Sciatic nerve (tissue), 2 donors: ENCODE measurements at regions of chr2 and their contacts with region 1.

Region 1: DNA sequence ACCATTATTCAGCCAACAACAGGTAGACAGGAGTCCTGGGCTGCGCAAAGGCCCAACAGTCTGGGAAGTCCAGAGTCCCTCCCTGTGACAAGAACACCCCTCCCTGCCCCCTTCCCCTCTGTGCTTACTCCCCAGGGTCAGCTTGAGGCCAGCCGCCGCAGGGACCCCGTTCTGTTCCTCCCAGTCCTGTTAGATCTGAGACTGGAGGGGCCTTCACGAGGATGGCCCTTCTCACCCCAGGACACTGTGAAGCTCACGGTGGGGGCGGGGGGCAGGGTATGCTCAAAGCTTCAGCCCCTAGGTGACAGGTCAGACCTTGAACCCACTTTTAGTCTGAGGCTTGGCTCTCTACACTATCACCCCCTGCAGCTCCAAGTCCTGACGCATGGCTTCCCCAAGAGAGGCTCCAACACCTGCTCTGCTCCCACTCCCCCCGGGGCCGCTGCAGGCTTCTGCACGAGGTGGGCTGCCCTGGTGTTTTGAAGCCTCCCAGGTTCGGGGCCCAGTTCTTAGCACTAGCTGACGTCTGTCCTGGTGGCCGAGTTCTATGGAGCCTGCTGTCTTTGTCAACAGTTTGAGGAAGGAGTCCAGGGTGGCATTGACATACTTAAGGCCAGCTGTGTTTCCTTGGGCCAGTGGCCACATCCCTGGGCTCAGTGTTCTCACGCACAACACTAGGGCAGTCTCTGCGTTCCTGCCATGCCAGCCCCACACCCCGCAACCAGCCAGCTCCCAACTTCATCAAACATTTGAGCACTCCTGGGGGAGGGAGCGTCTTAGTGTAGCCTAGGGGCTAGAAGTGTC is 37.2 kb upstream of the HPCAL1 start:
- DNase-seq: peak; percentile 48
- ATAC-seq: no peak

Region 2: GRCh38 chr2:10232096-10232815 is 33.3 kb before region 1 on chr2:
- intact Hi-C with region 1: loop called (anchors 2 kb)
- DNase-seq: peak; percentile 15
- ATAC-seq: no peak